Activated naive CD4-positive, alpha-beta T cell treated with anti-CD3 and anti-CD28 coated beads for 36 hours (primary cell): ENCODE measurements at regions of chrX and their contacts with region 1.

Region 1: GRCh38 chrX:120560842-120561633 is at the start of gene CUL4B:
- DNase-seq: peak; percentile 96
- H3K4me3 Mint-ChIP-seq: peak within 1 kb of the TSS; percentile 98
- H3K27ac Mint-ChIP-seq: peak within 1 kb of the TSS; percentile 98
- H3K4me1 Mint-ChIP-seq: peaks cover 16% of the 10 kb centered on the region
- H3K27me3 Mint-ChIP-seq: no peaks in the 10 kb centered on the region
- total RNA-seq, gene CUL4B: 53.2 to 60.1 TPM

Region 2: GRCh38 chrX:120238933-120239332 is 322.1 kb before region 1 on chrX:
- CTCF ChIA-PET with region 1: no interaction called
- intact Hi-C with region 1: no loop called
- DNase-seq: no peak
- H3K4me3 Mint-ChIP-seq: no peak overlapping the region
- H3K27ac Mint-ChIP-seq: no peak overlapping the region
- H3K4me1 Mint-ChIP-seq: peaks cover 16% of the 10 kb centered on the region
- H3K27me3 Mint-ChIP-seq: no peaks in the 10 kb centered on the region

Region 3: DNA sequence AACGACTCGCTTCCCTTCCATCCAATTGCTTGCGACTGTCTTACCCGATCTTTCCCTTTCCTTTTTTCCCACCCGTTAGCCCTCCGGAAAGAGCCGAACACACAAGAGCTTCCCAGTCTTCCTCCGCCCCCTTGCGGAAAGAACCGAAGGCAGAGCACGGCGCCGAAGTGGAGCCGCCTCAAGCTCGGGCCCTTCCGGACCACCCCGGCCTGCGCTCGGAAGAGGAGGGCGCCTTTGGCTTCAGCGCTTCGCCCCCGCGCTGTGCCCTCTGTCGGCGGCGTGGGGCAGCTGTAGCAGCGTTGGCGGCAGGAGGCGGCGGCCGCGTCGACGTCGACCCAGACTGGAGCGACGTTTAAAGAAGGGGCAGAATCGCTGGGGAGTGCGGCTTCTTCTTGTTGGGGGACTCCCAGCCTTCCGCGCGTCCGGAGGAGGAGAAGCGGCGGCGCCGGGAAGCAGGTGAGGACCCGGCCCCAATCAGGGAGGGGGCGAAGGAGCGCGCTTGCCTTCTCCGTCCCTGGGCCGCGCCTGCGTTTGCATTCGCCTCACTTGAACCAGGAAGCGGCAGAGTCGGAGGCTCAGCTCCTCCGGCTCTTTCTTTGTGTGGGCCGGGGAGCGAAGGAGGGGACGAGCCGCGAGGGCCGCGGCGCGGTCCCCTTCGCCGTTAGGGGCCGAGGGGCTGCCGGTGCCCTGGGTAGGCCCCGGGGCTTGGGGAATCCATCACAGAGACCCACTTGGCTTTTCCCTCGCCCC is 310.3 kb before region 1 on chrX and contains the start of gene ZBTB33:
- CTCF ChIA-PET with region 1: no interaction called
- intact Hi-C with region 1: loop called (anchors 2 kb)
- DNase-seq: peak; percentile 92
- H3K4me3 Mint-ChIP-seq: peak within 1 kb of the TSS; percentile 89
- H3K27ac Mint-ChIP-seq: peak within 1 kb of the TSS; percentile 96
- H3K4me1 Mint-ChIP-seq: peaks cover 22% of the 10 kb centered on the region
- H3K27me3 Mint-ChIP-seq: no peaks in the 10 kb centered on the region
- total RNA-seq, gene ZBTB33: 12.1 to 12.6 TPM

Region 4: DNA sequence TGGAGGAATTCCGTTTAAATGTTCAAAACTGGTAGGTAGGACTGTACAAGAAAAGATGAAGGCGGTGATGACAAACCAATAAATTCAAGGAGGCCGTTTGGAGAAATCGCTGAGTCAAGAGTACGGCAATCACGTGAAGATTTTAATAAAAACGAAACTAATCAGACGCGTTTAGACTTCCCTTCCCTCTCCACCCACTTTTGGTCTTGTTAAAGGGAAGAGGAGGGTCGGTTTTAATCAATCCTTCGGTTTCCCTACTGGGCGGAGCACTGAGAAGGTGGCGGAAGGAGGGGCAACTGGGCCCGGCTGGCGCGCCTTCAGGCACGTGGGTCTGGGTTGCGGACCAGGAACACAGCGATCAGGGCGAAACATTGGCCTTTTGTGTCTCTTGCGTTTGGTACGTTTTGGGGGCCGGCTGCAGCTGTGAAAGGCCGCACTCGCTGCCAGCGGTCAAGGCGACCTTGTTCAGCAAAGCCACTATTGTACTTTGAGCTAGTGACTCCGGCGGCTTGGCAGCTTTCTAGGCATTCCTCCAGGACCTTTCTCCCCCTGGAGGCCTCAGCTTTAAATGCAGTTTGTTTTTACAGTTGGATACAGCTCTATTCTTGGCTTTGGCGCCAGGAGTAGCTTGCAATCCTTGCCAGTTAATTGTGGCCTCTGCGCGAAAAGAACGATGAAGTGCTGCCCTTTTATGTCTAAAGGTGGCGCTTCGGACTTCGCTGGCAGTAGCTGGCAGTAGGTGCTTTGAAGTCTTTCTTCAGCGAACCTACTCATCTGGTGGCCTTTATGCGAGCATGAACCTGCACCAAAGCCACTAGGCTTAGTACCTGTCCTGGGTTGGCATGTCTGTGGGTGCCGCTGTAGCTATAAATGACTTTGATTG is 75.2 kb before region 1 on chrX:
- CTCF ChIA-PET with region 1: no interaction called
- intact Hi-C with region 1: loop called (anchors 5 kb)
- DNase-seq: peak; percentile 63
- H3K4me3 Mint-ChIP-seq: peak overlapping the region; percentile 68
- H3K27ac Mint-ChIP-seq: peak overlapping the region; percentile 83
- H3K4me1 Mint-ChIP-seq: peaks cover 27% of the 10 kb centered on the region
- H3K27me3 Mint-ChIP-seq: no peaks in the 10 kb centered on the region

Region 5: GRCh38 chrX:120603707-120604360 is 42.8 kb after region 1 on chrX and contains the start of gene MCTS1:
- CTCF ChIA-PET with region 1: interaction called, 3 read pairs
- intact Hi-C with region 1: loop called (anchors 1 kb)
- DNase-seq: peak; percentile 86
- H3K4me3 Mint-ChIP-seq: peak within 1 kb of the TSS; percentile 95
- H3K27ac Mint-ChIP-seq: peak within 1 kb of the TSS; percentile 98
- H3K4me1 Mint-ChIP-seq: peaks cover 7% of the 10 kb centered on the region
- H3K27me3 Mint-ChIP-seq: no peaks in the 10 kb centered on the region
- total RNA-seq, gene MCTS1: 58.6 to 63.4 TPM

Region 6: GRCh38 chrX:120697053-120697452 is 136.0 kb after region 1 on chrX:
- CTCF ChIA-PET with region 1: no interaction called
- intact Hi-C with region 1: loop called (anchors 1 kb)
- DNase-seq: peak; percentile 69
- H3K4me3 Mint-ChIP-seq: no peak overlapping the region
- H3K27ac Mint-ChIP-seq: peak overlapping the region; percentile 83
- H3K4me1 Mint-ChIP-seq: peaks cover 27% of the 10 kb centered on the region
- H3K27me3 Mint-ChIP-seq: no peaks in the 10 kb centered on the region

Region 7: DNA sequence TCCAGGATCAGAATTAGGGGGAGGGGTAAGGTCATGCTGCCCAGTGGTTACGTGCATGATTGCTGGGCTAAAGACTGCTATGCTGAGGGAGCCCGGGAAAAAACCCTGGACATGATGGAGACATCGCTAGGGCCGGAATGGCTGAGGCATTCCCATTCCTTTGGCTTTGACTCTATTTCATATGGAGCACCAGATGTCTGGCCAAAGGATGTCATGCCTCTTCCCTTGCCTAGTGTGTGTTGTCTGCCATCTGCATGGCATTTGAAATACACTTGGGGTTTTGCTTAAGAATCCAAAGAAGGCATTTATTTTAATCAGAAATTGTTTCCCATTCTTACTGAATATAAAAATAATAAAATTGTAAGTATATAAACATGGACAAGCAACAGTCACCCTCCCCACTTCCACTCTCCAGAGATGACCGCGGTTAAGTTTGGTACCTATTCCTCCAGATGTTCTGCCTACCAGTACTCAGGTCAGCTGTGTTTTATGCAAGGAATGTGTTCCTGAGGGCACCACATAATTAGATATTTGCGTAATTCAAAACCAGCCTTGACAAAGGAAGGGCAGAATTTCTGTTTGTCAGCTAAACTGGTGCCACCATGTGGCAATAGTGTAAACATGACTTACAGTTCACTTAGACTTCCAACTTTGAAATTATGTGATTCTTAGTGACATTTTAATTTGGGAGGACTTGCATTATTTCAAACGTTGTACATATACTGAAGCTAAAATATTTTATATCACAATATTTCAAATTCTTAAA is 208.7 kb after region 1 on chrX:
- CTCF ChIA-PET with region 1: no interaction called
- intact Hi-C with region 1: loop called (anchors 5 kb)
- DNase-seq: peak; percentile 21
- H3K4me3 Mint-ChIP-seq: no peak overlapping the region
- H3K27ac Mint-ChIP-seq: no peak overlapping the region
- H3K4me1 Mint-ChIP-seq: peaks cover 2% of the 10 kb centered on the region
- H3K27me3 Mint-ChIP-seq: no peaks in the 10 kb centered on the region